IMR-90 (cell line): ENCODE measurements at regions of chr7 and their contacts with region 1.

Region 1: GRCh38 chr7:12929476-12930140 is 242.2 kb downstream of the ARL4A start:
- DNase-seq: no peak
- ATAC-seq: peak; percentile 14; the same call in 1 of the 2 replicates
- H3K4me3 ChIP-seq: no peak overlapping the region
- H3K27ac ChIP-seq: no peak overlapping the region
- H3K4me1 ChIP-seq: no peaks in the 10 kb centered on the region
- H3K27me3 ChIP-seq: no peaks in the 10 kb centered on the region
- CTCF ChIP-seq: no peak
- POLR2A ChIP-seq: no peak
- RAD21 ChIP-seq: no peak

Region 2: GRCh38 chr7:12881712-12882111 is 47.9 kb before region 1 on chr7:
- CTCF ChIA-PET with region 1: no interaction called
- POLR2A ChIA-PET with region 1: no interaction called
- dilution Hi-C with region 1: no loop called
- in situ Hi-C with region 1: no loop called
- intact Hi-C with region 1: loop called (anchors 1 kb)
- DNase-seq: no peak
- ATAC-seq: no peak
- H3K4me3 ChIP-seq: no peak overlapping the region
- H3K27ac ChIP-seq: no peak overlapping the region
- H3K4me1 ChIP-seq: peaks cover 3% of the 10 kb centered on the region; the same call in 1 of the 2 replicates
- H3K27me3 ChIP-seq: no peaks in the 10 kb centered on the region
- CTCF ChIP-seq: no peak
- POLR2A ChIP-seq: no peak
- RAD21 ChIP-seq: no peak